ENCODE measurements at regions of chr3 and their contacts with region 1.

Region 1: DNA sequence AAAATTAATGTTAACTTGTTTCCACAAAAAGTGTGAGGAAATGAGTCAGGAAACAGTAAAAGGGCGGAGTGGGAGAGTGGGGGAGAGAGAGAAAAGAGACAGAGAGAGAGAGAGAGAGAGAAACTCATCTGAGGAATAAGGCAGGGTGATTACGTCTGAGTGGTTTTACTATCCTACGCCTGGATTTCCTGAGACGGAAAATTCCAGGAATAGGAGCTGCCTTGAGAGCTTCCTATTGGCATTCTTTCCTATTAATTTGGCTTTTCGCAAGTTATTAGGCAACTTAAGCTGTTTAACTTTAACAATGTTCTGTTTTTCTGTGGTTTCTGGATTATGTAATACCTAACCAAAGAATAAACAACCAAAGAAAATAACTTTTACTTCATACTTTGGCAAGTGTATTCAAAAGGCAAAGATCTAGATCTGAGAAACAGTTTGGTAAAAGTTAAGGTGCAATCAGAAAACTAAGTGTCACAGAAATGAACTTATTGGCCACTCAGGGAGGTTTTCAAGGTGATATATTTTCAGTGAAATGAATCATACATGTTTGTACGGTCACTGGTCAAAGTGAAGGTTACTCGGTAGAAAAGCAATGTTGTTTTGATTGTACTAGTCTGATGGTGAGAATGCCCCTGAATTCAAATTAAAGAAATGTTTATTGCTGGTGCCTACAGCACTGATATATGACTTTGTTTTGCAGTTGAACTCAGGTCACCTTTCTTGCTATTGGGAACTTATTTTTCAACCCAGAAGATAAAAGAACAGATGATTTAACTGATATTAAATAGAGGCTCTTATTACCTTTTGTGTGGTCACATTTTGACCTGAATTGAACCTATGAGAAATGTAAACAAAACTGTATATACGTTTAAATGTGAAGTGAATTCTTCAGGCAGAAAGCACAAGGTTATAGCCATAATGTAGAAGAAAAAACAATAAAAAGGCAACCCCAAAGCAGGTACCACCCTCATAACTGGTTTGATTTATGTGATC is 39.9 kb upstream of the TNFSF10 start:
- DNase-seq: peak; percentile 97
- H3K4me3 Mint-ChIP-seq: peak overlapping the region; percentile 57
- H3K27ac Mint-ChIP-seq: peak overlapping the region; percentile 95
- H3K4me1 Mint-ChIP-seq: peaks cover 28% of the 10 kb centered on the region
- H3K27me3 Mint-ChIP-seq: no peaks in the 10 kb centered on the region
- CTCF ChIP-seq: no peak

Region 2: DNA sequence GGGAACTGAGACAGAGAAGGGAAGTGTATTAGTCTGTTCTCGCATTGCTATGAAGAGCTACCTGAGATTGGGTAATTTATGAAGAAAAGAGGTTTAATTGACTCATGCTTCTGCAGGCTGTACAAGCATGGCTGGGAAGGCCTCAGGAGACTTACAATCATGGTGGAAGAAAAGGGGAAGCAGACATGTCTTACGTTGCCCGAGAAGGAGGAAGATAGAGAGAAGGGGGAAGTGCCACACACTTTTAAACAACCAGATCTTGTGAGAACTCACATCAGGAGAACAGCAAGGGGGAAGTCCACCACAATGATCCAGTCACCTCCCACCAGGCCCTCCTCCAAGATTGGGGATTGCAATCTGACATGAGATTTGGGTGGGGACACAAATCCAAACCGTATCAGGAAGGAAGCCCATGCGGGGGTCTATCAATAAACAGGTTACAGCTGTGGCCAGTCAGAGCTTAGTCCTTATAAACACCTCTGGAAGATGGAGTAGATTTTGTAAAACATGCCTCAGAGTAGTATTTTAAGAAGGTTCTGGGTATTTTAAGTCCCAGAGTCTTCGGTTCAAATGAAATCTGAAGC is 268.9 kb before region 1 on chr3:
- CTCF ChIA-PET with region 1: no interaction called
- POLR2A ChIA-PET with region 1: no interaction called
- intact Hi-C with region 1: no loop called
- DNase-seq: no peak
- H3K4me3 Mint-ChIP-seq: no peak overlapping the region
- H3K27ac Mint-ChIP-seq: peak overlapping the region; percentile 80
- H3K4me1 Mint-ChIP-seq: no peaks in the 10 kb centered on the region
- H3K27me3 Mint-ChIP-seq: no peaks in the 10 kb centered on the region
- CTCF ChIP-seq: no peak

Region 3: DNA sequence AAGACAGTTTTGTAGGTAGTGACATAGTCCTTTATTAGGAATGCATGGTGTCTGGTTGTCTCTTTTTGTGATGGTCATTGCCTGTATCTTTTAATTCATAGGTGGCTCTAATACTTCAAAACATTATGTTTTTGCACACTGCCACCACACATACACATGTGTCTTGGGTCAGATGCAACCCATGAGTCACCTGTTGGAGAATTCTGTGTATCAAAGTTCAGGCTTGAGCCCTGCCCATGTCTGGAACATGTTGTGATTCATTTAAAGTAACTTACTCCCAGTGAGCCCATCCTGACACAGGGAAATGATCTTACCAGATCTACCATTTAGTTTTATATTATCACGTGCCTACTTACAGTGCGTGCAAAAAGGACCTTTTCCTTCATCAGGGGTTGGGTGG is 257.6 kb before region 1 on chr3:
- CTCF ChIA-PET with region 1: no interaction called
- POLR2A ChIA-PET with region 1: no interaction called
- intact Hi-C with region 1: no loop called
- DNase-seq: peak; percentile 86
- H3K4me3 Mint-ChIP-seq: no peak overlapping the region
- H3K27ac Mint-ChIP-seq: peak overlapping the region; percentile 59
- H3K4me1 Mint-ChIP-seq: peaks cover 32% of the 10 kb centered on the region
- H3K27me3 Mint-ChIP-seq: no peaks in the 10 kb centered on the region
- CTCF ChIP-seq: no peak

Region 4: GRCh38 chr3:172511783-172512762 is 51.1 kb before region 1 on chr3:
- CTCF ChIA-PET with region 1: no interaction called
- POLR2A ChIA-PET with region 1: interaction called, 16 read pairs
- intact Hi-C with region 1: no loop called
- DNase-seq: no peak
- H3K4me3 Mint-ChIP-seq: no peak overlapping the region
- H3K27ac Mint-ChIP-seq: no peak overlapping the region
- H3K4me1 Mint-ChIP-seq: peaks cover 10% of the 10 kb centered on the region
- H3K27me3 Mint-ChIP-seq: no peaks in the 10 kb centered on the region
- CTCF ChIP-seq: no peak

Region 5: GRCh38 chr3:172522871-172523818 is 40.0 kb before region 1 on chr3 and contains the start of gene TNFSF10:
- CTCF ChIA-PET with region 1: no interaction called
- POLR2A ChIA-PET with region 1: interaction called, 14 read pairs
- intact Hi-C with region 1: no loop called
- DNase-seq: peak; percentile 62
- H3K4me3 Mint-ChIP-seq: peak within 1 kb of the TSS; percentile 68
- H3K27ac Mint-ChIP-seq: peak within 1 kb of the TSS; percentile 74
- H3K4me1 Mint-ChIP-seq: peaks cover 16% of the 10 kb centered on the region
- H3K27me3 Mint-ChIP-seq: no peaks in the 10 kb centered on the region
- CTCF ChIP-seq: no peak
- total RNA-seq, gene TNFSF10: 0.25 and 0.54 TPM in 2 replicates

Region 6: DNA sequence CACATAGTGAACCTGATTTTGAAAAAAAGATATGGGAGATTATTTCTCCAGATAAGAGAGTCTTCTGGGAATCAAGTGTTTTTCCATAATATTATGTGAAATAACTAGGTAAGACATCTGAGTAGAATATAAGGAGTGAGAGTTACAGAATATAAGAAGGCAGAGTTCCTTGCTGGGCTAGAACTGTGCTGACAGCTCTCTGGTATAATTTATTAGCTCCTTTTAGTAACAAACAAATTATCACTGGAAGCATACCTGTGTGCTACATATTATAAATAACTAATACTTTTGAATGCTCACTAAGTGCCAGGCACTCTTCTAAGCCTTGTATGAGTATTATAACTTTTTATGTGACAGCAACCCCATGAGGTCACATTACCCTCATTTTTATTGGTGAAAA is 21.1 kb before region 1 on chr3:
- CTCF ChIA-PET with region 1: interaction called, 5 read pairs
- POLR2A ChIA-PET with region 1: interaction called, 28 read pairs
- intact Hi-C with region 1: no loop called
- DNase-seq: no peak
- H3K4me3 Mint-ChIP-seq: no peak overlapping the region
- H3K27ac Mint-ChIP-seq: no peak overlapping the region
- H3K4me1 Mint-ChIP-seq: peaks cover 17% of the 10 kb centered on the region
- H3K27me3 Mint-ChIP-seq: no peaks in the 10 kb centered on the region
- CTCF ChIP-seq: no peak

Region 7: DNA sequence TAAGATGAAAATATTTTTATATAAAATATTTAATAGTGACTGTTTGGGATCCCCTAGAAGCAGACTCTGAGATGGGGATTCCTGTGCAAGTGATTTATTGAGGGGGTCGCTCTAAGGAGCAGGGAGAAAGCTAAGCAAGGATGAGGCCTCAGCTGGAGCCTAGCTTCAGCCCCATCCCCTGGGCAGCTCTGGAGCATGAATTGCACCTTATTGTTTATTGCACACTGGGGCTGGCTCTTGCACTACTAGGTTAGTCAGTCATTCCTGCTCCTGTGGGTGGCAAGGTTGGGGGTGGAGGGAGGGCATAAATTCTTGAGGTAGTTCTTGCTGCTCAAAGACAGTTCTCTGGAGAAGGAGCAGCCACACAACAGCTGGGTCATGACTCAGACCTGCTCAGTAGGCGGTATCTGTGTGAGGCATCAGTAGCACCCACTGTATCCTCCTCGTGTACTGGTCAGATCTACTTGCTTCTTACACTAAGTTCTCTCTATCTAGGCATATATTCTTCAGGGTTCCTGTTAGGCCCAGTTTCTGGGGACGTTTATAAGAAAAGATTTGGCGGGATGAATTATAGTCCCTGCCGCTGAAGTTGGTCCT is 12.7 kb before region 1 on chr3:
- CTCF ChIA-PET with region 1: interaction called, 5 read pairs
- POLR2A ChIA-PET with region 1: interaction called, 28 read pairs
- intact Hi-C with region 1: no loop called
- DNase-seq: peak; percentile 95
- H3K4me3 Mint-ChIP-seq: no peak overlapping the region
- H3K27ac Mint-ChIP-seq: peak overlapping the region; percentile 27
- H3K4me1 Mint-ChIP-seq: peaks cover 15% of the 10 kb centered on the region
- H3K27me3 Mint-ChIP-seq: no peaks in the 10 kb centered on the region
- CTCF ChIP-seq: no peak

Region 8: GRCh38 chr3:172577962-172578570 is 14.9 kb after region 1 on chr3:
- CTCF ChIA-PET with region 1: interaction called, 5 read pairs
- POLR2A ChIA-PET with region 1: interaction called, 13 read pairs
- intact Hi-C with region 1: no loop called
- DNase-seq: no peak
- H3K4me3 Mint-ChIP-seq: no peak overlapping the region
- H3K27ac Mint-ChIP-seq: no peak overlapping the region
- H3K4me1 Mint-ChIP-seq: peaks cover 15% of the 10 kb centered on the region
- H3K27me3 Mint-ChIP-seq: no peaks in the 10 kb centered on the region
- CTCF ChIP-seq: no peak

Region 9: DNA sequence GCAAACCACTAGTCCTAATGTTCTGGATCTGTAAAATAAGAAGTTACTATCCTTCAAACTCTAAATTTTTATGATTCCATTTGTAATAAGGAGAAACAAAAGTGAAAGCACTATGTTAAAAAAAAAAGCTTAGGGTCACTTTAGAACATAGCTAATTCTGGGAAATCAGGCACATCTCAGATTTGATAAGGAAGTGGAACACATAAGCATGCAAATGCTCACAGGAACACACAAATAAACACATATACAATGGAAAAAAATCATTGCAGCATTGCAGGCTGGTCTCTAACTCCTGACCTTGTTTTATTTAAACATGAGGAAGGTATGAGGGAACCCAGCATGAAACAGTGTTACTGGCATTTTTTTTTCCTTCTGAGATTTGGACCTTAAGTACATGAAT is 23.3 kb after region 1 on chr3:
- CTCF ChIA-PET with region 1: interaction called, 5 read pairs
- POLR2A ChIA-PET with region 1: interaction called, 13 read pairs
- intact Hi-C with region 1: no loop called
- DNase-seq: no peak
- H3K4me3 Mint-ChIP-seq: no peak overlapping the region
- H3K27ac Mint-ChIP-seq: no peak overlapping the region
- H3K4me1 Mint-ChIP-seq: peaks cover 37% of the 10 kb centered on the region
- H3K27me3 Mint-ChIP-seq: no peaks in the 10 kb centered on the region
- CTCF ChIP-seq: no peak